Activated T-helper 1 cell treated with anti-CD3 and anti-CD28 coated beads, Interleukin-12 subunit alpha, Interleukin-12 subunit beta, Interleukin-2, Interleukin-4 antibody, amounts not matched to agents 30 ng/mL and 10 ng/mL and 1 ng/mL, durations not matched to agents 14 hours and 24 hours and 36 hours (primary cell): ENCODE measurements at regions of chr3 and their contacts with region 1.

Region 1: GRCh38 chr3:126208618-126209256 is 28.4 kb upstream of the ALDH1L1 start:
- DNase-seq: no peak
- H3K4me3 Mint-ChIP-seq: no peak overlapping the region
- H3K27ac Mint-ChIP-seq: no peak overlapping the region
- H3K4me1 Mint-ChIP-seq: no peaks in the 10 kb centered on the region
- H3K27me3 Mint-ChIP-seq: peaks cover 19% of the 10 kb centered on the region

Region 2: DNA sequence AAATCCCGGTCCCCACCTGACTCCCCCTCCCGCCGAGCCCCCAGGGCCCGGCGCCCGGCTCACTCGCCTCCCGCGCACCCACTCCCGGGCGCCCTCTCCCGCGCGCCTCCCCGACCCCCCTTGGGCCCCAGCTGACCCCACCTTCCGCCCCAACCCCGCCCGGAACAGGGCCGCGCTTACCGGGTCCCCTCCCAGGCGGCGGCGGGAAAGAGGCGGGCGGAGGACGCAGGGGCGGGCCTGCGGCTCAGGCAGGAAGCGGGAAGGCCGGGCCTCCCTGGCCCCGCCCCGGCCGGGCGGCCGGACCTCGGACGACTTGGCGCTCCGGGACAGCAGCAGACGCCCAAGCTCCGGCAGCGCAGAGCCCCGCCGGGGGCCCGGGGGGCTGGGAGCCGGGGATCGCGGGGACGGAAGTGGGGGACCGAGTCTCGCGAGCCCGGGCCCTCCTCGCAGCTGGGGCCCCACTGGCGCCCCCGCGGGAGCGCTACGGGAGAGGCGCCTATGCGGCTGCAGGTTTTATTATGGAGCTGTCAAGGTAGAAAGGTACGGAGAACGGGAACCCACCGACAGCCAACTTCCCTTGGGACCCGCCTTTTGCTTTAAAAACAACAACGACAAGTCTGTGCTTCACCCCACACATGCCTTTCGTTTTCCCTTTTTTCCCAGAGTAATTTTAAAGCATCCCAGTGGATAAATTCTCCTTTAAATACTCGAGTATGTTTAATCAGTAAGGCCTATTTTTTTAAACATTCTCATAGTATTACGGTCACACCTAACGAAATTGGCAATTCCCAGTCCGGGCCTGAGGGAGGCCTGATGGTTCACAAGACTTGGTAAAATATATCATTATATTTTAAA is 124.6 kb before region 1 on chr3 and contains the start of gene SLC41A3:
- intact Hi-C with region 1: no loop called
- DNase-seq: peak; percentile 90
- H3K4me3 Mint-ChIP-seq: peak within 1 kb of the TSS; percentile 93
- H3K27ac Mint-ChIP-seq: peak within 1 kb of the TSS; percentile 89
- H3K4me1 Mint-ChIP-seq: peaks cover 26% of the 10 kb centered on the region
- H3K27me3 Mint-ChIP-seq: no peaks in the 10 kb centered on the region
- total RNA-seq, gene SLC41A3: 17.3 and 23.4 TPM in 2 replicates

Region 3: DNA sequence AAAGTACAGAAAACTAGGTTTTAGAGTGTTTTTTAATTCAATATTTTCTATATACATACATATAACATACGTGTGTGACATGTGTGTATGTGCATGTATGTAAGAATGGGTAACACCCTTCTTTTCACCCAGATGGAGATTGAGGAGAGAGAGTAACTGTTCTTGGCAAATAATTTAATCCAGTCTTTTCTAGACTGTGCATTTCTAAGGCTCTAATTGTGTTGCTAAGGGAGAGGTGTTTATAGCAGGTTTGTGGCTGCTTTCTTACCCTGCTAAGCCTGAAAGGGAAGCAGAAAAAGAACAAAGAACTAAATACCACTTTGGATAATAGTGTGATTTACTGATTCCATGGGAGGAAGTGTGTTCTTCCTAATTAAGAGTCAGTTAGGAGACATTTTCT is 17.6 kb after region 1 on chr3:
- intact Hi-C with region 1: loop called (anchors 1 kb)
- DNase-seq: no peak
- H3K4me3 Mint-ChIP-seq: no peak overlapping the region
- H3K27ac Mint-ChIP-seq: no peak overlapping the region
- H3K4me1 Mint-ChIP-seq: no peaks in the 10 kb centered on the region
- H3K27me3 Mint-ChIP-seq: peaks cover 9% of the 10 kb centered on the region

Region 4: DNA sequence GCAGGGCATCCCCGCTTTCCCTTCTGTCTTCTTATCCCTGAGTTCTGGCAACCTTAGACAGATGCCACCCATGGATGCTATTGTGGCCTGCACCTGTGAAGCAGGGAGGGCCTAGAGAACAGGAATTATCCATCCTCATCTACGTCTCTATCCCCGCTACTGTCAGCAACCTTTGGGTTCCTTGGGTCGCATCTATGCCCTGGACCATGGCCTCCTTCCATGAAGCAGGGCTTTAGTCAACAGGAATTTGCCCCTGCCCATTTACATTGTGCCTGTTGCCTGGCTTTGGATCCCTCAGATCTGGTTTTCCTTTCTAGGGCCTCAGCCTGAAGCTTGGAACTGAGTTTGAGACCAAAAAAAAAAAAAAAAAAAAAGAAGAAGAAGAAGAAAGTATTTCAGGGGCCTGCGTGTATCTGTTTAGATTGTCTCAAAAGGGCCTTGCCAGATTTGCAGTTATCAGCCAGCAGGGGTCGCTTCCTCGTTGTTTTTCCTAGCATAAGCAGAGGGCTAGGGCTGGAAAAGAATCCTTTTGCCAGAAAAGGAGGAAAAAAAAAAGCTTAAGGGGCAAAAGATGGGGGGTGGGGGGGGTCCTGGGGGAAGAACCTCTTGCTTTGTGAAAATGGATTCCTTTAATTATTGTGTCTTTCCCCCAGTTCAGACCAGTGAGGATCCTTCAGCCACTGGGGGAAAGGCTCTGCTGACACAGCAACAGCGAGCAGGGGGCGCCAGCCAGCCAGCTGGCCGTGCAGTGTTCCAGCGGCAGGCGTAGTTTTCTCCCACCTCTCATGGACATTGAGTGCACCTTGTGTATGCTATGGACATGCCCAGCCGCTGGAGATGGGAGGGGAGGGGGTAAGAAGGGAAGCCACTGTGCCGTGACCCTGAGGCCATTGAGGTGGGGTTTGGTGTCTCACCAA is 37.3 kb after region 1 on chr3:
- intact Hi-C with region 1: no loop called
- DNase-seq: no peak
- H3K4me3 Mint-ChIP-seq: no peak overlapping the region
- H3K27ac Mint-ChIP-seq: no peak overlapping the region
- H3K4me1 Mint-ChIP-seq: no peaks in the 10 kb centered on the region
- H3K27me3 Mint-ChIP-seq: no peaks in the 10 kb centered on the region